OCI-LY7 (cell line): ENCODE measurements at regions of chr17 and their contacts with region 1.

Region 1: GRCh38 chr17:29483503-29483902 is 83.3 kb downstream of the ABHD15 start:
- DNase-seq: no peak
- H3K4me3 ChIP-seq: no peak overlapping the region
- H3K27ac ChIP-seq: no peak overlapping the region
- H3K4me1 ChIP-seq: no peaks in the 10 kb centered on the region
- CTCF ChIP-seq: no peak

Region 2: DNA sequence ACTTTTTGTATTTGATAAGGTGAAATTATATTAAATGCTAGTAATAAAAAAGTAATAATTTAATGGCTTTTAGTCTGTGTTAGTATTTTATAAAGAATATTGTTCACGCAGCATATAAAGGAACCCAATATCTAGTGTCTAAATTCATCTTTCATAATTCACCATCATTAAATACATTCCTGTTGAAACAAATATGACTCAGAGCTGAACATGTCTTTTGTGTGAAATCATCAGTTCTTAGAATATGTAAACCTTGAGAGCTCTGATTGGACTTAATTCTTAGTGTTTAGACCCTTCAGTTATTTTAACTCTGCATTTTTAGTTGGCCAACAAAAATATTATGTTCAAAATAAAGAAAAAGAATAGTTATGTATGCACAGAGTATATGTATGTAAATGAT is 11.5 kb after region 1 on chr17:
- CTCF ChIA-PET with region 1: no interaction called
- POLR2A ChIA-PET with region 1: interaction called, 10 read pairs
- intact Hi-C with region 1: no loop called
- DNase-seq: no peak
- H3K4me3 ChIP-seq: no peak overlapping the region
- H3K27ac ChIP-seq: no peak overlapping the region
- H3K4me1 ChIP-seq: no peaks in the 10 kb centered on the region
- CTCF ChIP-seq: no peak